ENCODE measurements at regions of chr22 and their contacts with region 1.

Region 1: GRCh38 chr22:31107178-31107893 is at the start of gene SELENOM:
- DNase-seq: peak; percentile 97 to 98 (median 98)
- H3K4me3 ChIP-seq: peak within 1 kb of the TSS; percentile 84
- H3K27ac ChIP-seq: peak within 1 kb of the TSS; percentile 84 to 95
- H3K4me1 ChIP-seq: peaks cover 11% of the 10 kb centered on the region
- H3K27me3 ChIP-seq: no peaks in the 10 kb centered on the region
- CTCF ChIP-seq: peak; percentile 91 to 97 (median 92)
- EP300 ChIP-seq: no peak
- POLR2A ChIP-seq: peak; percentile 95
- total RNA-seq, gene SELENOM: 229 to 678 (median 306) TPM

Region 2: GRCh38 chr22:30277547-30278344 is 829.6 kb before region 1 on chr22:
- intact Hi-C with region 1: loop called in 1 of 4 experiments (anchors 10 kb)
- DNase-seq: peak in 1 of 5 donors; percentile 44
- H3K4me3 ChIP-seq: no peak overlapping the region
- H3K27ac ChIP-seq: peak overlapping the region in 1 of 2 donors; percentile 23
- H3K4me1 ChIP-seq: no peaks in the 10 kb centered on the region
- H3K27me3 ChIP-seq: no peaks in the 10 kb centered on the region
- CTCF ChIP-seq: no peak
- EP300 ChIP-seq: no peak
- POLR2A ChIP-seq: no peak

Region 3: GRCh38 chr22:31148953-31149627 is 41.8 kb after region 1 on chr22:
- intact Hi-C with region 1: loop called in 1 of 4 experiments (anchors 2 kb)
- DNase-seq: peak; percentile 70 to 77 (median 72)
- H3K4me3 ChIP-seq: no peak overlapping the region
- H3K27ac ChIP-seq: no peak overlapping the region
- H3K4me1 ChIP-seq: no peaks in the 10 kb centered on the region
- H3K27me3 ChIP-seq: no peaks in the 10 kb centered on the region
- CTCF ChIP-seq: peak; percentile 61 to 84 (median 62)
- EP300 ChIP-seq: no peak
- POLR2A ChIP-seq: no peak

Region 4: DNA sequence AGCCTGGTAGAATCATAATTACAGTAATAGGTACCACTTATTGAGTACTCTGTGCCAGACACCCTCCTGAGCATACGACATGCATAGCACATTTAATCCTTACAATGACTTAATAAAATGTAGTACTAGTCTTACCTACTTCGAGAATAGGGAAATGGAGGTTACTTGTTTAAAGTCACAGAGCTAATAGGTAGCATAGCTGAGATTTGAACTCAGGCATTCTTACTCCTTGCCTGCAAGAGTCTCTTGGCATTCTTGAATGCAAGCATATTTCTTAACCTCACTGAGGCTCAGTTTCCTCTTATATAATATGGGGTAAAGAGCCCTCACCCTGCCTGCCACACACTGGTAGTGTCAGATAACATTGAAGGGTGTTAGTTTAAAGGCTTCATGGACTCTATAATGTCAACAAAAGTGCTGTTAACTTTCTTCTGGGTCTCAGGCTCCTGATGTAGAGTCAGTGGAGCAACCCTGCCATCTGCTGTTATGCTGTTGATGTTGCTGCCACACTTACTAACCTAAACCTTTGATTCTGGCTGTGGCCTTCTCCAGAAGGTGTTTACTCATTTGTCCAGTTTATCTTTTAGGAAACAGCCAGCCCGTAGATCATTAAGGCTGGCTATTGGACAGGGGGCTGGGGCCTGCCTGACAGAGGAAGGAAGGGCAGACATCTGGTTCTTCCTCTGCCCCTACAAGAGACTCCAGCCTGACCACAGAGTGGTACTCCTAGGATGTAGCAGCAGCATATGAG is 123.7 kb after region 1 on chr22:
- intact Hi-C with region 1: loop called in 1 of 4 experiments (anchors 10 kb)
- DNase-seq: peak; percentile 33 to 60 (median 52)
- H3K4me3 ChIP-seq: no peak overlapping the region
- H3K27ac ChIP-seq: peak overlapping the region in 1 of 2 donors; percentile 16
- H3K4me1 ChIP-seq: no peaks in the 10 kb centered on the region
- H3K27me3 ChIP-seq: no peaks in the 10 kb centered on the region
- CTCF ChIP-seq: peak; percentile 30 to 72 (median 57)
- EP300 ChIP-seq: no peak
- POLR2A ChIP-seq: no peak